ENCODE measurements at regions of chr12 and their contacts with region 1.

Region 1: GRCh38 chr12:34300376-34301250 is 278.3 kb downstream of the ALG10 start:
- DNase-seq: no peak
- H3K4me3 ChIP-seq: no peak overlapping the region
- H3K27ac ChIP-seq: no peak overlapping the region
- H3K4me1 ChIP-seq: no peaks in the 10 kb centered on the region
- H3K27me3 ChIP-seq: no peaks in the 10 kb centered on the region
- CTCF ChIP-seq: no peak

Region 2: DNA sequence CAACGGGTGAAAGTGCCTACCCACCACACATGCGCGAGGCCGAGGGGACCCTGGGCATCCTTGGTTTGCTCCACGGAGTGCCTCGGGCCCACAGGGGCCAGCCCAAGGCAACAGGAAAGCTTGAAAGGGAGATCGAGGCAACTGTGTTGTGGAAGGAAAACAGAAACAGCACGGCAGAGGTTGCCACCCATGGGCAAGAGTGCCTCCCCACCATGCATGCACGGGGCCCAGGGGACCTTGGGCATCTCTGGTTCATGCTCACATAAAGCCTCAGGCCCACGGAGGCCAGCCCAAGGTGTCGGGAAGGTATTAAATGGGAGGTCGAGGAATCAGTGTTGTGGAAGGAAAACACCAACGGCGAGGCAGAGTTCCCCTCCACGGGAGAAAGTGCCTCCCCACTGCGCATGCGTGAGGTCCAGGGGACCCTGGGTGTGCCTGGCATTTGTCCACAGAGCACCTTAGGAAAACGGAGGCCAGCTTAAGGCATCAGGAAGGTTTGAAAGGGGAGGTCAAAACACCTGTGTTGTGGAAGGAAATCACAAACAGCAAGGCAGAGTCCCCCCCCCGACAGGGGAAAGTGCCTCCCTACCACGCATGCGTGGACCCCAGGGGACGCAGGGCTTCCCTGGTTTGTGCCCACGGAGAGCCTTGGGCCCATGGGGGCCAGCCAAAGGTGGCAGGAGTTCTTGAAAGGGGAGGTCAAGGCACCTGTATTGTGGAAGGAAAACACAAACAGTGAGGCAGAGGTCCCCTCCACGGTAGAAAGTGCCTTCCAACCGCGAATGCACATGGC is 89.0 kb after region 1 on chr12:
- CTCF ChIA-PET with region 1: no interaction called
- dilution Hi-C with region 1: no loop called
- in situ Hi-C with region 1: loop called in 1 of 2 experiments (anchors 10 kb)
- intact Hi-C with region 1: no loop called
- DNase-seq: no peak
- H3K4me3 ChIP-seq: no peak overlapping the region
- H3K27ac ChIP-seq: no peak overlapping the region
- H3K4me1 ChIP-seq: no peaks in the 10 kb centered on the region
- H3K27me3 ChIP-seq: no peaks in the 10 kb centered on the region
- CTCF ChIP-seq: no peak

Region 3: GRCh38 chr12:34402228-34402898 is 101.8 kb after region 1 on chr12:
- CTCF ChIA-PET with region 1: no interaction called
- dilution Hi-C with region 1: no loop called
- in situ Hi-C with region 1: no loop called
- intact Hi-C with region 1: no loop called
- DNase-seq: no peak
- H3K4me3 ChIP-seq: no peak overlapping the region
- H3K27ac ChIP-seq: no peak overlapping the region
- H3K4me1 ChIP-seq: no peaks in the 10 kb centered on the region
- H3K27me3 ChIP-seq: no peaks in the 10 kb centered on the region
- CTCF ChIP-seq: no peak

Measured in mammary epithelial cell (primary cell).